ENCODE measurements at regions of chr15 and their contacts with region 1.

Region 1: GRCh38 chr15:92625251-92625980 is 30.2 kb downstream of the FAM174B start:
- DNase-seq: peak; percentile 93
- ATAC-seq: peak; percentile 89
- H3K4me3 ChIP-seq: no peak overlapping the region
- H3K27ac ChIP-seq: peak overlapping the region; percentile 90
- H3K4me1 ChIP-seq: peaks cover 41% of the 10 kb centered on the region
- H3K27me3 ChIP-seq: no peaks in the 10 kb centered on the region
- CTCF ChIP-seq: no peak; a peak in 1 of 6 replicates
- EP300 ChIP-seq: peak in 1 of 2 experiments; percentile 14; a peak in 2 of 4 replicates
- POLR2A ChIP-seq: no peak
- RAD21 ChIP-seq: no peak

Region 2: GRCh38 chr15:92655178-92655995 is 30.0 kb after region 1 on chr15 and contains the start of gene FAM174B:
- CTCF ChIA-PET with region 1: no interaction called
- POLR2A ChIA-PET with region 1: no interaction called
- RAD21 ChIA-PET with region 1: interaction called, 5 read pairs
- SMC1A ChIA-PET with region 1: interaction called, 6 read pairs
- in situ Hi-C with region 1: no loop called
- intact Hi-C with region 1: loop called (anchors 1 kb)
- DNase-seq: no peak
- ATAC-seq: peak; percentile 76
- H3K4me3 ChIP-seq: peak within 1 kb of the TSS; percentile 65
- H3K27ac ChIP-seq: peak within 1 kb of the TSS; percentile 38
- H3K4me1 ChIP-seq: peaks cover 4% of the 10 kb centered on the region; the same call in 1 of the 2 replicates
- H3K27me3 ChIP-seq: no peaks in the 10 kb centered on the region
- CTCF ChIP-seq: peak in 1 of 3 experiments; percentile 17; a peak in 1 of 6 replicates
- EP300 ChIP-seq: no peak
- POLR2A ChIP-seq: peak; percentile 80
- RAD21 ChIP-seq: no peak
- polyA plus RNA-seq, gene FAM174B: 0.71 to 2.4 TPM

Region 3: DNA sequence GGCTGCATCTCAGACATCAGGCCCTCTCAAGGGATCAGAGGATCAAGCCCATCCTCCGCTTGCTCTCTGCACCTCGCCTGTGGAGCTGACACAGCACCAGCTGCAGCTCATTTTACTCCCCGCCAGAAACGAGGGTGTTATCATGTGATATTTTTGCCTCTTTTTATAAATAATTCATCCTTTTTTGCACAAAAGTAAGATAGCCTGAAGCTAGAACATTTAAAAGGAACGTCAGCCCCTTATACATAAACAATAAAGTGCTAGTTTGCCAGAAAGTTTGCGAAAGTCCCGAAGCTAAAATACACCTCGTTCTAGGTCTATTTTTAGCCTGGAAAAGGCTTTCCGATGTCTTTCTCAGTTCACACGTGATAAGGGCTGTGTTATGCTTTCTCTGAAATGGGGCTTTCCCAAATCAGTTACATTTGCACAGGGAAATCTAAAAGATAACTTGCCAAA is 39.7 kb after region 1 on chr15:
- CTCF ChIA-PET with region 1: interaction called, 4 read pairs
- POLR2A ChIA-PET with region 1: interaction called, 6 read pairs
- RAD21 ChIA-PET with region 1: interaction called, 6 read pairs
- SMC1A ChIA-PET with region 1: interaction called, 5 read pairs
- in situ Hi-C with region 1: no loop called
- intact Hi-C with region 1: loop called (anchors 1 kb)
- DNase-seq: peak; percentile 53
- ATAC-seq: peak; percentile 41
- H3K4me3 ChIP-seq: no peak overlapping the region
- H3K27ac ChIP-seq: peak overlapping the region; percentile 71
- H3K4me1 ChIP-seq: peaks cover 30% of the 10 kb centered on the region
- H3K27me3 ChIP-seq: no peaks in the 10 kb centered on the region
- CTCF ChIP-seq: no peak
- EP300 ChIP-seq: no peak
- POLR2A ChIP-seq: no peak
- RAD21 ChIP-seq: no peak

Measured in GM12878 (cell line).